Activated CD4-positive, alpha-beta T cell treated with anti-CD3 and anti-CD28 coated beads for 36 hours (primary cell): ENCODE measurements at regions of chr9 and their contacts with region 1.

Region 1: DNA sequence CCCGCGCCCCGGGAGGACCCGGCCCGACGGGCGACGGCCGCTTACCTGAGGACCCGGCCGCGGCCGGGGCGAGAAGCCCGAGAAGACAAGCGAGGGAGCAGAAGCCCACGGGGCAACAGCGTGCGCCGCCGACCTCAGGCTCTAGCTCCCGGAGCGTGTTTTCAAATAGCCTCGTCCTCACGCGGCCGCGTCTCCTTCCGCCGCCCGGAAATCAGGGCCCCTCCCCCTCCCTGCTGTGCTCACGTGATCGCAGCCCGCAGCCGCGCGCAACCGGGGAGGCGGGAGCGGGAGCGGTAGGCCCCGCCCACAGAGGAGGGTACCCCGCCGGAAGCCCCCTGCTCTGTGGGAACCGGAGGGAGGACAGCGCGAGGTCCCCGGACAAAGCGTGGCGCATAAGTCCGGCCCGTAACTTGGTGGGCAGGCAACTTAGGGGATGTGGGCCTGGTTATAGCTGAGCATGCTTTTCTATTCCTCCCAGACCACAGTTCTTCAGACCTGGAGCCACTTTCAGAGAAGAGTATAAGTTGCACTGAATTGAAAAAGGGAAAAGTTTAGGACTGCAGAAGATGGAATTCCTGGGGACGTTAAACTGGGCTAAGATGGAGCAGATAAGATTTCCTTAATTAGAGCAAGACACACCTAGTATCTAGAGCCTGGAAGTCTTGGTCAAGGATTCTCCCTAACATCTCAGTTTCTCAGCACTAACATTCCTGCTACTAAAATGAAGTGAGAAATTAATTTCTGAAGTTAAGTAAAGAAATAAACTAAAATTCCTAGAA is at the start of gene TEX10:
- DNase-seq: peak; percentile 93
- ATAC-seq: peak; percentile 93
- H3K4me3 Mint-ChIP-seq: peak within 1 kb of the TSS; percentile 95
- H3K27ac Mint-ChIP-seq: peak within 1 kb of the TSS; percentile 91
- H3K4me1 Mint-ChIP-seq: peaks cover 41% of the 10 kb centered on the region
- H3K27me3 Mint-ChIP-seq: no peaks in the 10 kb centered on the region
- total RNA-seq, gene TEX10: 24.8 to 27.5 TPM

Region 2: DNA sequence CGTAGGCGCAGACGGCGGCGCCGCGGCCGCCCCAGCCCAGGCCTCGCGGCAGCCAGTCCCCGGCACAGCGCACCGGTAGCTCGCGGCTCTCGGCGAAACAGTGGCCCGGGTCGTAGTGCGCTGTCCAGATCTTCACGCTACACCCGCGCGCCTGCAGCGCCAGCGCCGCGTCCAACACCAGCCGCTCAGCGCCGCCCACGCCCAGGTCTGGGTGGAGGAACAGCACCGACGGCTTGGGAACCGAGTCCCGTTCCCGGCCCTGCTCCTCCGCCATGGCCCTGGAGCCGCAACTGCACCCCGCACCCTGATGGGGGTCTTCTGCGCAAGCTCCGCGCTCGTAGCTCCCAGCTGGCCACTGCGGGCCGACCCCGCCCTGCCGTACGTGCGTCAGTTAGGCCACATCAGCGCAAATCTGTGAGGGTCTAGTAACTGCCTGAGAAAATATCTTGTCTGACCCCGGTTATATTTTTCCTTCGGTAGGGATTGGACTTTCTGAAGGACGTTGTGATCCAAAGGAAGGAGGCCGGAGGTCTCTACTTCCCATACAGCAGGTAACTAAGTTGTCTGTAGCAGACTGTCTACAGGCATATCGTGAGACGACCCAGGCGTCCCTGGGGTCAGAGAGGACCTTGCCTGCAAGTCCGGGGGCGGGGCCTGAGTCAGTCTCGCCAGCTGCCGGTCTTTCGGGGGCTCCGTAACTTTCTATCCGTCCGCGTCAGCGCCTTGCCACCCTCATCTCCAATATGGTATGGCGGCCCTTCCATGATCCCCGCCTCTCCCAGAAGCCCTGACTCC is 1131.1 kb before region 1 on chr9 and contains the starts of genes ALG2 and SEC61B:
- CTCF ChIA-PET with region 1: no interaction called
- POLR2A ChIA-PET with region 1: no interaction called
- intact Hi-C with region 1: loop called in 1 of 2 experiments (anchors 2 kb)
- DNase-seq: peak; percentile 97
- ATAC-seq: peak; percentile 94
- H3K4me3 Mint-ChIP-seq: peak within 1 kb of the TSS; percentile 99
- H3K27ac Mint-ChIP-seq: peak within 1 kb of the TSS; percentile 99
- H3K4me1 Mint-ChIP-seq: peaks cover 67% of the 10 kb centered on the region
- H3K27me3 Mint-ChIP-seq: no peaks in the 10 kb centered on the region
- total RNA-seq, gene ALG2: 22.8 to 31.1 TPM
- total RNA-seq, gene SEC61B: 81.0 to 139 TPM

Region 3: DNA sequence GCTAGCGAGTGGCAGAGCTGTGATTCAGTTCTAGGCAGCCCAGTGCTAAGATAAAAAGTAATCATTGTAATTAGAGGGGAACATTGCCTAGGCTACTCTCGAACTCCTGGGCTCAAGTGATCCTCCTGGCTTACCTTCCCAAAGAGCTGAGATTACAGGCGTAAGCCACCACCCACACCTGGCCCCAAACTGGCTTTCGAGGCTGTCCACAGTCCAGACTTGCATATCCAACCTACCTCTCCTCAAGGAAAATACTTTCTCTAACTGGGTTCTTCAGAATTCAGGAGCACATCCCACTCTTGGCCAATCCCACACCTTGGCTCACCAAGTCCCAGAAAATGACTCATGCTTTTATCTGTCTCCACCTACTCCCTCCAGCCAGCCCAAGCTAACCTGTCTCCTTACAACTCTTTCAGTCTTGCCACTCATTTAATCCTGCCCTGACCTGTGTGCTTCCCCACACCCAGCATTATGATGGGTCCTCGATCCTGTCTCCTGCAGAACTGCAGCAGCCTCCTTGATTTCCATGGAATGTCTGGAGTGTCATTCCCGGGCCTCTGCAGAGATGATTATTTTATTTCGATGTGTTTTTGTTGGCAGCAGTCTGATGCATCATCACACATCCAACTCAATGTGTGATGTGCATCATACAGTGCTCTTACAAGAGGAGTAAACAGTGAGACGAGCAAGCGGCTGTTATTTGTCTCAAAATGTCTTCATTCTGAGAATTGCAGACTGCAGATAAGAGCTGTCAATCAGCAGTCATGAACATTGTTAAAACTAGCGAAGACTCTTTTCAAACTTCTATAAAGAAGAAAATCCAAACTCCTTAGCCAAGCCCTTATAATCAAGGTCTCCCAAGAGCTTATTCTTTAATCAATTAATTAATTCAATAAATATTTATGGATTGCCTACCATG is 963.6 kb before region 1 on chr9:
- CTCF ChIA-PET with region 1: no interaction called
- POLR2A ChIA-PET with region 1: no interaction called
- intact Hi-C with region 1: no loop called
- DNase-seq: no peak
- ATAC-seq: no peak
- H3K4me3 Mint-ChIP-seq: no peak overlapping the region
- H3K27ac Mint-ChIP-seq: no peak overlapping the region
- H3K4me1 Mint-ChIP-seq: no peaks in the 10 kb centered on the region
- H3K27me3 Mint-ChIP-seq: peaks cover 7% of the 10 kb centered on the region

Region 4: GRCh38 chr9:99576002-99576401 is 776.9 kb before region 1 on chr9:
- CTCF ChIA-PET with region 1: no interaction called
- POLR2A ChIA-PET with region 1: no interaction called
- intact Hi-C with region 1: no loop called
- DNase-seq: no peak
- ATAC-seq: no peak
- H3K4me3 Mint-ChIP-seq: no peak overlapping the region
- H3K27ac Mint-ChIP-seq: no peak overlapping the region
- H3K4me1 Mint-ChIP-seq: no peaks in the 10 kb centered on the region
- H3K27me3 Mint-ChIP-seq: peaks cover 1% of the 10 kb centered on the region

Region 5: DNA sequence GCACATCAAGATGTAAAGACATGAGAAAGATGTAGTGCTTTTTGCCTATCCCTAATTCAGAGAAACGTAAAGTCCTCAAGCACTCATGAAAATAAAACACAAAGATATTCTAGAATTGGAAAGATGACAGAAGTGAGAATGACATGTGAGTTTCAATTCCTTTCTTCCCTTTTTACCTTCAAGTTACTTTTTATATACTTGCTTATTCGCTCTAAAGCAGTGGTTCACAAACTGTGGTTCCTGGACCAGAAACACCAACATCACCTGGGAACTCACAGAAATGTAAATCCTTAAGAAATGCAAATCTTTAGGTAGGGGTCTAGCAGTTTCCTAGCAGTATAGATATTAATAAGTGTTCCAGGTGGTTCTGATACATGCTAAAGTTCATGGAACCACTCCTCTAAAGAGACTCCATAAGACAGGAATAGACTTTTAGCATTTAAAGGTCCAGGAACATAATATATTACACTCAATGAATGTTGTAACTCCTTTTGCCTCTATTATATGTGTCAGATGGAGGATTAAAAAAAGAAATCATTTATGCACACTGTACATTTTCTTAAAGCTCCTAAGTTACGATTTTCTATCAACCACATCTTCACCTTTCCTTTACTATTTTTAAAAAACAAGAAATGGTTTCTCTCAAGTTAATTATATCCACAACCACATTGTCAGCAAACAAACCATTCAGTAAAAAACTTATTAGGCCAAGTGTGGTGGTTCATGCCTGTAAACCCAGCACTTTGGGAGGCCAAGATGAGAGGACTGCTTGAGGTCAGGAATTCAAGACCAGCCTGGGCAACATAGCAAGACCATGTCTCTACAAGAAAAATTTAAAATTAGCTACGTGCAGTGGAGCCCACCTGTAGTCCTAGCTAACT is 294.0 kb before region 1 on chr9:
- CTCF ChIA-PET with region 1: no interaction called
- POLR2A ChIA-PET with region 1: no interaction called
- intact Hi-C with region 1: no loop called
- DNase-seq: no peak
- ATAC-seq: no peak
- H3K4me3 Mint-ChIP-seq: no peak overlapping the region
- H3K27ac Mint-ChIP-seq: no peak overlapping the region
- H3K4me1 Mint-ChIP-seq: peaks cover 8% of the 10 kb centered on the region
- H3K27me3 Mint-ChIP-seq: no peaks in the 10 kb centered on the region

Region 6: GRCh38 chr9:100098887-100099721 is 253.8 kb before region 1 on chr9 and contains the starts of genes ERP44 and INVS:
- CTCF ChIA-PET with region 1: interaction called, 3 read pairs
- POLR2A ChIA-PET with region 1: no interaction called
- intact Hi-C with region 1: loop called in 1 of 2 experiments (anchors 1 kb)
- DNase-seq: peak; percentile 98
- ATAC-seq: peak; percentile 99
- H3K4me3 Mint-ChIP-seq: peak within 1 kb of the TSS; percentile 100
- H3K27ac Mint-ChIP-seq: peak within 1 kb of the TSS; percentile 97
- H3K4me1 Mint-ChIP-seq: peaks cover 24% of the 10 kb centered on the region
- H3K27me3 Mint-ChIP-seq: no peaks in the 10 kb centered on the region
- total RNA-seq, gene ERP44: 12.0 to 12.4 TPM
- total RNA-seq, gene INVS: 14.1 to 19.3 TPM

Region 7: GRCh38 chr9:100309992-100310391 is 42.9 kb before region 1 on chr9:
- CTCF ChIA-PET with region 1: no interaction called
- POLR2A ChIA-PET with region 1: no interaction called
- intact Hi-C with region 1: no loop called
- DNase-seq: no peak
- ATAC-seq: no peak
- H3K4me3 Mint-ChIP-seq: no peak overlapping the region
- H3K27ac Mint-ChIP-seq: no peak overlapping the region
- H3K4me1 Mint-ChIP-seq: peaks cover 17% of the 10 kb centered on the region
- H3K27me3 Mint-ChIP-seq: no peaks in the 10 kb centered on the region

Region 8: DNA sequence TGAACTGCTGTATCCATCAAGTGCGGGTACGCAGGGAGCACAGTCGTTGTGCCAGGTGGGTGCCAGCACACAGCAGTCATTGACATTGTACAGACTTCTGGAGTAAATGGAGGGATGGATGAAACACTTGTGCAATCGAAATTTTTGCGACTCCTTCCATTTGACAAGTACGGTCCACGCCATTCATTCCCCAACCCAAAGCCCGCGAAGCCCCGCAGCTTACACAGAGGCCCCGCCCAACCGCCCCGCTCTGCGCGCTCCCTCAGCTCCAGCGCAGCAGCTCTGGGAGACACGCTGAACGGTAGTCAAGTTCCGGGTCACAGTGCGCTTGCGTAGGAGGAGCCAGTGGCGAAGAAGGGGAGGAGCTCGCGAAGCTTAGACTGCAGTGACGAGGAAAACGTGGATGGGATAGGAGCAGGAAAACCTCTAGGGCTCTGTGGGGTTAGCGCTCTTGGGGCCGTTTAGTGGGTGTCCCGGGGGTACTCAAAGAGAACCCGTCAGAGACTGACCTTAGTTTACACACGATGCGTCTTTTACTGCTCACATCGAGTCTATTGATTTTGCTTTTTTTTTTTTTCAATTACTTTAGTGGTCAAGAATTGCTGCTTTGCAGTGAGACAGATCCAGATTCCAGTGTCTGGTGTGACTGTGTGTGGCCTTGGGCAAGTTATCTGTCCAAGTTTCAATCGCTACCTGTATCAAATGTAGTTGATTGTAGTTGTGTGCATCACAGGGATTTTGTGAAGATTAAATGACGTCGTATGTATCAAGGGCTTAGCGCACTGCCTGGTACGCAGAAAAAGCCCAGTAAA is 58.8 kb after region 1 on chr9:
- CTCF ChIA-PET with region 1: no interaction called
- POLR2A ChIA-PET with region 1: no interaction called
- intact Hi-C with region 1: loop called (anchors 1 kb)
- DNase-seq: peak; percentile 92
- ATAC-seq: peak; percentile 100
- H3K4me3 Mint-ChIP-seq: peak overlapping the region; percentile 70
- H3K27ac Mint-ChIP-seq: peak overlapping the region; percentile 74
- H3K4me1 Mint-ChIP-seq: peaks cover 15% of the 10 kb centered on the region
- H3K27me3 Mint-ChIP-seq: peaks cover 14% of the 10 kb centered on the region

Region 9: GRCh38 chr9:100472788-100473275 is 119.9 kb after region 1 on chr9 and contains the start of gene TMEFF1:
- CTCF ChIA-PET with region 1: no interaction called
- POLR2A ChIA-PET with region 1: interaction called, 3 read pairs
- intact Hi-C with region 1: loop called in 1 of 2 experiments (anchors 2 kb)
- DNase-seq: peak; percentile 81
- ATAC-seq: peak; percentile 87
- H3K4me3 Mint-ChIP-seq: peak within 1 kb of the TSS; percentile 52
- H3K27ac Mint-ChIP-seq: no peak within 1 kb of the TSS
- H3K4me1 Mint-ChIP-seq: peaks cover 8% of the 10 kb centered on the region
- H3K27me3 Mint-ChIP-seq: peaks cover 29% of the 10 kb centered on the region
- total RNA-seq, gene TMEFF1: 0.27 TPM in 1 of 2 experiments, not detected in the other